MCF 10A (cell line): ENCODE measurements at regions of chr1 and their contacts with region 1.

Region 1: GRCh38 chr1:94335950-94336349 is 82.2 kb upstream of the ABCD3 start:
- DNase-seq: peak; percentile 93
- H3K4me3 Mint-ChIP-seq: no peak overlapping the region
- H3K27ac Mint-ChIP-seq: no peak overlapping the region
- H3K4me1 Mint-ChIP-seq: no peaks in the 10 kb centered on the region
- H3K27me3 Mint-ChIP-seq: peaks cover 11% of the 10 kb centered on the region
- CTCF ChIP-seq: peak; percentile 92

Region 2: DNA sequence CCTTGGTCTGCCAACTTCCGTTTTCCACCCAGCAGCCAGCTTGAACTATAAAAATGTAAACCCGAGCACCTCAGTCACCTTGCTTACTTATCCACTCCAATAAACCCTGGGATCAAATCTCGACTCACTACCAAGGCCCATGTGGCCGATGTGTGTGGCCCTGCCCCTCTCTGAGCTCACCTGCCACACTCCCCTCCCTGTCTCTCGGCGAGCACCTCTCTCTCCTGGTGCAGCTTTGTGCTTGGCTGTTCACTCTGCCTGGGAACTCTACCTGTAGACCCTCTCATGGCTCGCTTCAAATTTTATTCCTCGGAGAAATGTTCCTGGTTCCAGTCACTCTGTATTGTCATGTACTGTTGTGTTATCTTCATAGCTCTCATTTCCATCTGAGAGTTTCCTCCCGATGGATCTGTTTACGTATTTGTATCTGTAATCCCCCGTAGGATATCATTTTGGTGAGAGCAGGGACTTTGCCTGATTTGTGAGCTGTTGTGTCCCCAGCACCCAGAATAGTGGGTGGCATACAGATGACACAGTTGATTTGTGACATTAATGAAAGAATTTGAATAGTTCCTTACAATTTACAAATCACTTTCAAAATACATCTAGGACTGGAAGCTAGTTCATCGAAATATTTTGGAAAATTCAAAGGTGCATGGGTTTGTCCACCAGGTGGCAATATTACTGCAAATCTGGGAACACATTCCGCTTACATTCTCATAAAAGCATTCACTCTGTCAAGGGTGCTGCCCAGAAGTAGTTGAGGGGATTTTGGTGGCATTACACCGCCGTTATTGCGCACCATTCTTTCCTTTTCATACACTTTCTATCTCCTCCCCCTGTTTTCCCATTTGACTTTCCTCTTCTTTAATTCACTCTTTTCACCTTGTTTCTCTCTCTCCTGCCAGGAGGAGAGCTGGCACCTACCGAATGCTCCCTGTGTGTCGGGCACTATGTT is 310.3 kb before region 1 on chr1:
- CTCF ChIA-PET with region 1: interaction called, 285 read pairs
- POLR2A ChIA-PET with region 1: interaction called, 6 read pairs
- intact Hi-C with region 1: loop called (anchors 1 kb)
- DNase-seq: peak; percentile 77
- H3K4me3 Mint-ChIP-seq: no peak overlapping the region
- H3K27ac Mint-ChIP-seq: peak overlapping the region; percentile 77
- H3K4me1 Mint-ChIP-seq: peaks cover 36% of the 10 kb centered on the region
- H3K27me3 Mint-ChIP-seq: no peaks in the 10 kb centered on the region
- CTCF ChIP-seq: peak; percentile 72

Region 3: GRCh38 chr1:94055459-94056122 is 280.4 kb before region 1 on chr1:
- CTCF ChIA-PET with region 1: interaction called, 391 read pairs
- POLR2A ChIA-PET with region 1: interaction called, 9 read pairs
- intact Hi-C with region 1: no loop called
- DNase-seq: peak; percentile 37
- H3K4me3 Mint-ChIP-seq: no peak overlapping the region
- H3K27ac Mint-ChIP-seq: no peak overlapping the region
- H3K4me1 Mint-ChIP-seq: peaks cover 8% of the 10 kb centered on the region
- H3K27me3 Mint-ChIP-seq: no peaks in the 10 kb centered on the region
- CTCF ChIP-seq: no peak

Region 4: DNA sequence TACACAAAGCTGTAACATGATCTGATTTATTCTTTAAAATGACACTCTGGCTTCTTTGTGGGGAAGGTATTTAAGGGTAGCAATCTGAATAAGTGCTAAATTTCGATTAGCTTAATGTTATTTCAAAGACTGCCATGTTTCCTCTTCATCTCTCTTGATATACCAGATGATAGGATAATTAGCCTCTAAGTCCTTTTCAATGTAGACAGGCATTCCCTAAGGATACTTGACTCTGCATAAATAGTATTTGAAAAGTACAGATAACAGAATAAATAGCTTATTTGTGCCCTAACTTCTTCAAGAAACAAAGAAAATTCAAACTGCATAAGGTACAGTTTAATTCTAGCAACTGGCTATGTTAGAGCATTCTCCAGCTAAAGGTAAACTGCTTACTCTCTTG is 144.7 kb before region 1 on chr1:
- CTCF ChIA-PET with region 1: interaction called, 12 read pairs
- POLR2A ChIA-PET with region 1: no interaction called
- intact Hi-C with region 1: no loop called
- DNase-seq: no peak
- H3K4me3 Mint-ChIP-seq: no peak overlapping the region
- H3K27ac Mint-ChIP-seq: no peak overlapping the region
- H3K4me1 Mint-ChIP-seq: no peaks in the 10 kb centered on the region
- H3K27me3 Mint-ChIP-seq: no peaks in the 10 kb centered on the region
- CTCF ChIP-seq: no peak

Region 5: DNA sequence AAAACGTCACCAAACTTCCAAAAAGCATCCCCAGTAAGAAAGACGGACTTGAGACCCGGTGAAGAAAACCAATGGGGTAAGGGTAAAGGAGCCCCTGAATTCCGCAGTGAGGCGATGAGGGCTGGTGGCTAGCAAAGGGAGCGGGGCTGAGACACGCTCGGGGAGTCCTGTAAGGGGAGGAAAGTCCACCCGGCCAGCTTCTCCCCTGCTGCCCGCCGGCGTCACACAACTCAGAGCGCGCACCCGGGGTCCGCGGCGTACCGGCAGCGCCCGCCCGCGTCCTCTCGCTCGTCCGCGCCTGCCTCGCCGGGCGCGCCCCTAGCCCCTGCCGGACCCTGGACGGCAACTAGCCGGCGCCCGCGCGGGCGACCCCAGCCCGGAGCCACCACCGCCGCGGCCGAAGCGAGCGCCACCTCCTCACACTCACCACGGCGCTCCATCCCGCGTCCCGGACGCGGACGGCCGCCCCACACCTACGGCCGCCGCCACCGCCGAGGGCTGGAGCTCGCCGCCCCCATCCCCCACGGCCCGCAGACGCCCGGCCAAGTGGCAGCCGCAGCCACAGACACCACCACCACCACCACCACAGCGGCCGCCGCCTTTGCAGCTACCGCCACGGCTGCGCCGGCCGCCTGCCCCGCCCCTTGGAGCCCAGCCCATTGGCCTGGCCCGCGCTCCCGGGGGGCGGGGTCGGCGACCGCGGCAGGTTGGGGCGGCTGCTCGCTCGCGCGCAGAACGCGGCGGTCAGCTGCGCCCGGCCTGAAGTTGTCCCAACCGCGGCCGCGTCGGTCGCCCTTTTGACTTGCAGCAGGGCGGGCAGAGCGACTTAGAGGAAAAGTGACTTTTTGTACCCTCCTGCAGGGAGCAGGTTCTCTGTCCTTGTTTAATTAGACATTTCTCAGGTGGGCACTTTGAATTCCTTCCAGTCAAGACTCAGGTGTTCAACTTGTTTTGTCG is 88.5 kb before region 1 on chr1:
- CTCF ChIA-PET with region 1: interaction called, 22 read pairs
- POLR2A ChIA-PET with region 1: interaction called, 3 read pairs
- intact Hi-C with region 1: no loop called
- DNase-seq: peak; percentile 72
- H3K4me3 Mint-ChIP-seq: peak overlapping the region; percentile 82
- H3K27ac Mint-ChIP-seq: peak overlapping the region; percentile 77
- H3K4me1 Mint-ChIP-seq: peaks cover 23% of the 10 kb centered on the region
- H3K27me3 Mint-ChIP-seq: no peaks in the 10 kb centered on the region
- CTCF ChIP-seq: no peak

Region 6: DNA sequence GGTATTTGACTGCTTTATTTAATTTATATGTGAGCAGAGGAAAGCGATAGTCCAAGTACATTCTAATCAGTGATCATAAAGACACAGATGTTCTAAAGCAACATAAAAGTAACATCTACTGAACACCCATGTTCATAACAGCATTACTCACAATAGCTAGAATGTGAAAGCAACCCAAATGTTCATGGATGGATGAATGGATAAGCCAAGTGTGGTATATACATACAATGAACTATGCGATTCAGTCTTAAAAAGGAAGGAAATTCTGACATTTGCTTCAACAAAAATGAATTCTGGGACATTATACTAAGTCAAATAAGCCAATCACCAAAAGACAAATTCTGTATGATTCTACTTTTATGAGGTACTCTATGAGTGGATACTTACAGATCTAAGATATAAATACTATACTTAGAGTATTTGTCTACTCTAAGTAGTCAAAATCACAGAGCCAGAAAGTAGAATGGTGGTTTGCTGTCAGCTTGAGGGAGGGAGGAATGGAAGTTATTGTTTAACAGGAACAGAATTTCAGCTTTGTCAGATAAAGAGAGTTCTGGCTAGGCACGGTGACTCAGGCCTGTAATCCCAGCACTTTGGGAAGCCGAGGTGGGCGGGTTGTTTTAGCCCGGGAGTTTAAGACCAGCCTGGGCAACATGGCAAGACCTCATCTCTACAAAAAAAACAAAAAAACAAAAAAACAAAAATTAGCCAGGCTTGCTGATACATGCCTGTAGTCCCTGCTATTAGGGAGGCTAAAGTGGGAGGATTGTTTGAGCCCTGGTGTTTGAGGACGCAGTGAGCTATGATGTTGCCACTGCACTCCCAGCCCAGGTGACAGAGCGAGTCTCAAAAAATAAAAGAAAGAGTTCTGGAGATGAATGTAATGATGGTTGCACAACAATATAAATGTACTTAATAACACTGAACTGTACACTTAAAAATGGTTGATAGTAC is 18.8 kb before region 1 on chr1:
- CTCF ChIA-PET with region 1: interaction called, 17 read pairs
- POLR2A ChIA-PET with region 1: no interaction called
- intact Hi-C with region 1: no loop called
- DNase-seq: peak; percentile 23
- H3K4me3 Mint-ChIP-seq: no peak overlapping the region
- H3K27ac Mint-ChIP-seq: peak overlapping the region; percentile 65
- H3K4me1 Mint-ChIP-seq: peaks cover 7% of the 10 kb centered on the region
- H3K27me3 Mint-ChIP-seq: no peaks in the 10 kb centered on the region
- CTCF ChIP-seq: no peak

Region 7: DNA sequence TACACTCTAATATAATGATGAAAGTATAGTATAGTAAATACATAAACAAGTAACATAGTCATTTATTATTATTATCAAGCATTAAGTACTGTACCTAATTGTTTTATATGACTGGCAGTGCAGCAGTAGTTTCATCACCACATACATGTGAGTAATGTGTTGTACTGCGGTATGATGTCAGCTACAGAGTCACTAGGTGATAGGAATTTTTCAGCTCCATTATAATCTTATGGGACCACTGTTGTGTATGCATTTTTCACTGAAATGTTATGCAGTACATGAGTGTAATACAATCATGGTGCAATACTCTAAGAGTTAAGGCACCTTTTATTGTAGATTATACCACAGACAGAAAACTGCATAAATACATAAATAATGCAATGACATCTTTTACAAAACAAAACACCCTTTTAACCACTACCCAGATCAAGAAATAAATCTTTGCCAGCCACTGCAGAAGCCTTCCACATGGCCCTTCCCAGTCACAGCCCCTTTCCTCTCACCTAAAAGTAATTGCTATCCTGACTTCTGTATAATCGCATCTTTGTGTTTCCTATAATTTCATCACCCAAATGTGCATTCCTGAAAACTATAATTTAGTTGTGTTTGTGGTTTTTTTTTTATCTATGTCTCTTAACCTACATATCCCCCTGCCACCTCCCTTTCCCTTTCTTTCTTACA is 98.6 kb after region 1 on chr1:
- CTCF ChIA-PET with region 1: no interaction called
- POLR2A ChIA-PET with region 1: no interaction called
- intact Hi-C with region 1: no loop called
- DNase-seq: peak; percentile 5
- H3K4me3 Mint-ChIP-seq: no peak overlapping the region
- H3K27ac Mint-ChIP-seq: no peak overlapping the region
- H3K4me1 Mint-ChIP-seq: peaks cover 10% of the 10 kb centered on the region
- H3K27me3 Mint-ChIP-seq: no peaks in the 10 kb centered on the region
- CTCF ChIP-seq: no peak

Region 8: GRCh38 chr1:95067062-95067461 is 731.1 kb after region 1 on chr1:
- CTCF ChIA-PET with region 1: no interaction called
- POLR2A ChIA-PET with region 1: no interaction called
- intact Hi-C with region 1: no loop called
- DNase-seq: no peak
- H3K4me3 Mint-ChIP-seq: no peak overlapping the region
- H3K27ac Mint-ChIP-seq: no peak overlapping the region
- H3K4me1 Mint-ChIP-seq: peaks cover 9% of the 10 kb centered on the region
- H3K27me3 Mint-ChIP-seq: no peaks in the 10 kb centered on the region
- CTCF ChIP-seq: no peak